ENCODE measurements at regions of chr14 and their contacts with region 1.

Region 1: GRCh38 chr14:68795597-68796417 is 2.9 kb upstream of the ZFP36L1 start:
- DNase-seq: peak; percentile 90
- ATAC-seq: peak; percentile 57
- H3K4me3 Mint-ChIP-seq: peak overlapping the region; percentile 89
- H3K27ac Mint-ChIP-seq: peak overlapping the region; percentile 98
- H3K4me1 Mint-ChIP-seq: peaks cover 35% of the 10 kb centered on the region
- H3K27me3 Mint-ChIP-seq: no peaks in the 10 kb centered on the region

Region 2: DNA sequence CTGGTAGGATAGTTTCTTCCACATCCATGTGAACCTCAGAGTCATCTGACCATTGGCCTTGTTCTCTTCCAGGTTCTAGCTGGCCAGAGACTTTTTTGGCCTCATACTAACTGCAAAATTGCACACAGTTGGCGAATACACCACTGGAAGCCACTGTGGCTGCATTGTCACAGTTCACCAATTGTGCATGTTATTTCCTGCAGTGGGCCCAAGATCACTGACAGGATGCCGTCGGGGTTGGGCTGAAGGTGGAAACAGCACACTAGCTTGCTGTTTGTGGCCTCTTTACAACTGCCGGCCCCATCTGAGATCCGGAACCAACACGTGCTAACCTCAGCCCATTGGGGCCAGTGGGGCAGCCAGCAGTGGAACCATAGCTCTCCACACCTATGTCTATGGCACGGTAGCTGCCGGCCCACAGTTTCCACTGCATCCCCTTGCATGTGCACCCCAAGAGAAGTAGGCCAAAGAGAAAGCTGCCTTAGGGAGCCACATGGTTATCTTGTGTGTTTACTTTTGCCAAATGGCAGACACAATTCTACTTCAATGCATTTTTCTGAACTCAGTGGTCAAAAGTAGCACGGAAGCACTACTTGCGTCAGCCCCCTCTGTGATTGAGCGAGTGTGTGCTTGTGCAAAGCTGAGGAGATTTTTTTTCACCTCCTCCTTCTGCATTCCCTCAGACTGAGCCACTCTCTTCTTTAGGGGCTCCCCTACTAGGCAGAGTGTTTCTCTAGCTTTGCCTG is 512.3 kb before region 1 on chr14:
- POLR2A ChIA-PET with region 1: interaction called, 19 read pairs
- DNase-seq: peak; percentile 70
- ATAC-seq: peak; percentile 85
- H3K4me3 Mint-ChIP-seq: peak overlapping the region; percentile 44
- H3K27ac Mint-ChIP-seq: peak overlapping the region; percentile 98
- H3K4me1 Mint-ChIP-seq: peaks cover 46% of the 10 kb centered on the region
- H3K27me3 Mint-ChIP-seq: no peaks in the 10 kb centered on the region

Region 3: GRCh38 chr14:68703093-68703492 is 92.7 kb before region 1 on chr14:
- POLR2A ChIA-PET with region 1: no interaction called
- DNase-seq: no peak
- ATAC-seq: no peak
- H3K4me3 Mint-ChIP-seq: no peak overlapping the region
- H3K27ac Mint-ChIP-seq: no peak overlapping the region
- H3K4me1 Mint-ChIP-seq: peaks cover 2% of the 10 kb centered on the region
- H3K27me3 Mint-ChIP-seq: peaks cover under 1% of the 10 kb centered on the region

Region 4: DNA sequence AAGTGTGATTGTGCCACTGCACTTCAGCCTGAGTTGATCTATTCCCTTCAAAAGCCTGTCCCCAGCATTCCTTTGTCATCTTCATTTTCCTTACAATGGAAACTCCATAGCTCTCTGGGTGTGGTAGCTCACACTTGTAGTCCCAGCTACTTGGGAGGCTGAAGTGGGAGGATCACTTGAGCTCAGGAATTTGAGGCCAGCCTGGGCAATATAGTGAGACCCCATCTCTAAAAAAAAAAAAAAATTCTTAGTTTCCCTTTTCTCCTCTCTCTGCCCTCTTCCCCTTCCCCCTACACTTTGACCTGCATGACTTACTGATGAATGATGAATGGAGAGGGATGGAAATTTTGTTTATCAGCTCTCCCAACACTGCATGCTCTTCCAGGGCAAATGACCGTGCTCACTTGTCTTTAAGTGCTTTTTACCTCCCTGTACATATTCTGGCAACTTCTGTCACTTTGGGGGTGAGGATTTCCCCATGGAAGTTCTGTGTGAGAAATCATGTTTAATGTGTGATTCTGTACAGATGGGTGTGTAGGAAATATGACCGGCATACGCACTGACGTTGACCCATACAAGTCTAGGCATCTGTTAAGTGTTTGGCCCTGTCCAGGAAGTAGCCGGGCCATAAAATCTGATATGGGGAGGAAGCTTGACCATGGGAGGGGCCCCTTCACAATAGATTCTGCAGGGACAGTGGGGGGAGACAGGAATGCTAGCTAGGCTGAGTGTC is 68.3 kb before region 1 on chr14:
- POLR2A ChIA-PET with region 1: no interaction called
- DNase-seq: no peak
- ATAC-seq: no peak
- H3K4me3 Mint-ChIP-seq: no peak overlapping the region
- H3K27ac Mint-ChIP-seq: no peak overlapping the region
- H3K4me1 Mint-ChIP-seq: peaks cover 2% of the 10 kb centered on the region
- H3K27me3 Mint-ChIP-seq: peaks cover 4% of the 10 kb centered on the region

Region 5: GRCh38 chr14:68749487-68750475 is 46.0 kb before region 1 on chr14:
- POLR2A ChIA-PET with region 1: no interaction called
- DNase-seq: no peak
- ATAC-seq: no peak
- H3K4me3 Mint-ChIP-seq: no peak overlapping the region
- H3K27ac Mint-ChIP-seq: no peak overlapping the region
- H3K4me1 Mint-ChIP-seq: no peaks in the 10 kb centered on the region
- H3K27me3 Mint-ChIP-seq: peaks cover 10% of the 10 kb centered on the region

Region 6: DNA sequence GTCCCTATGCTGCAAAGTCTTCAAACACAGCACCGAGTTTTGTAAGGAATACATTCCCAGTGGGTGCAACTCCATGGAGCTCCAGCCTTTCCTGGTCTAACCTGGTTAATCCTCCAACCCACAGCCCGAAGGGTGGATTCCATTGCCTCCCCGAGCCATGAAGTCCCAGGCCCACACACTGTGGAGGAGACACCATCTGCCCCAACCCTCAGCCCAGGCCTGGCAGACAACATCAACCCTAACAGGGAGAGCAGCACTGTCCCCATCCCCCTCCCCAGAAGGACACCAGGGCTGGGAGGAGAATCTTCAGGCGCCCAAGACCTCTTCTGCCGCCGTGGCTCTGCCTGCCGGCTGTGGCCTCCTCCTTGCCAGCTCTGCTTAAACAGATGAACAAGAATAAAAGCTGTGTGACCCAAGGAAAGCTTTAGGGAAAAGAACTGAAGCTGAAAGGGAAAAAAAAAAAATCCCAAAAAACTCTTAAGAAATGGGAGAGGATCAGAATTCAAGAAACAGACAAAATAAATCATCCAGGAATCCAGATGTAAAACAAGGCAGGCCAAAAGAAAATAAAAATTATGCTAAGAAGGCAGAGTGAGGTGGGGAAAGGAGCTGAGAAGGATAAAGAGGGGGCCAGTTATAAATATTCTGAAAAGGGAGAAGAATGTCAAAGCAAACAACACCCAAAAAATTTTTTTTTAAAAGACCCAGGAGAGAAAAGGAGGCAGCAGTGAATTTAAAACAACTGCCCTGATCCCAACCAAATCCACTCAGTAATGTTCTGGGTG is 13.1 kb after region 1 on chr14:
- POLR2A ChIA-PET with region 1: interaction called, 295 read pairs
- DNase-seq: no peak
- ATAC-seq: no peak
- H3K4me3 Mint-ChIP-seq: no peak overlapping the region
- H3K27ac Mint-ChIP-seq: no peak overlapping the region
- H3K4me1 Mint-ChIP-seq: peaks cover 11% of the 10 kb centered on the region
- H3K27me3 Mint-ChIP-seq: no peaks in the 10 kb centered on the region

Region 7: DNA sequence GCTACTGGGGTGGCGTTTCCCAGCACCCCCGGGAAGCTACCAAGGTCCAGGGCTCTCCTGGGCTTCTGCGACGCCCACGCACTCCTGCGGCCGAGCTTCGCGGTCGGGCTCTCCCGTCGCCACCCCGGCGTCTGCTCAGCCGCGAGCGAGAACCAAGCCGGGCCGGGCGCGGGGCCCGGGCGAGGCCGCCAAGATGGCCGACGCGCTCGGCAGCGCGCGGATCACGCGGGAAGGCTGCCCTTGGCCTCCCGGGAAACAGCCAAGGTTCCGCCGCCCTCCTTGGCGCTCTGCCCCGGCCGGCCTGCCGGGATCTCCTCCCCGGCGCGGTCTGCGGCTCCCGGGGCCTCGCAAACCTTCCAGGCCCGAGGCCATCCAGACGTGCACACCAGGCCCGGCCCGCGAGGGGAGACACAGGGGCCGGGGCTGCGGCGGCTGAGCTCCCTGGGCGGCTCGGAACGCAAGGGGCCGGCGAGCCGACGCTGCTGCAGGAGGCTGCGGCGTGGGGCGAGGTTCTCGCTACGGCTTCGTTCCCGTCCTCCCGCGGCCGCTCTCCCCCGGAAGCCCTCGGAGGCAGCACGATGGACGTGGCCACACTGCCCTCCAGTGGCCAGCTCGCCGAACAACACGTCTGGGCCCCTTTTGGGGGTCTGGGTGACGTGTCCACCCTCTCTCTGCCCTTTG is 20.6 kb after region 1 on chr14:
- POLR2A ChIA-PET with region 1: interaction called, 295 read pairs
- DNase-seq: peak; percentile 93
- ATAC-seq: peak; percentile 83
- H3K4me3 Mint-ChIP-seq: peak overlapping the region; percentile 84
- H3K27ac Mint-ChIP-seq: peak overlapping the region; percentile 89
- H3K4me1 Mint-ChIP-seq: peaks cover 47% of the 10 kb centered on the region
- H3K27me3 Mint-ChIP-seq: no peaks in the 10 kb centered on the region

Measured in activated naive CD8-positive, alpha-beta T cell treated with anti-CD3 and anti-CD28 coated beads, Interleukin-2, amount 10 ng/mL, durations not matched to agents 7 days and 5 days (primary cell).